Activated CD8-positive, alpha-beta T cell treated with anti-CD3 and anti-CD28 coated beads, Interleukin-2, amount 10 ng/mL, durations not matched to agents 7 days and 5 days (primary cell): ENCODE measurements at regions of chr12 and their contacts with region 1.

Region 1: DNA sequence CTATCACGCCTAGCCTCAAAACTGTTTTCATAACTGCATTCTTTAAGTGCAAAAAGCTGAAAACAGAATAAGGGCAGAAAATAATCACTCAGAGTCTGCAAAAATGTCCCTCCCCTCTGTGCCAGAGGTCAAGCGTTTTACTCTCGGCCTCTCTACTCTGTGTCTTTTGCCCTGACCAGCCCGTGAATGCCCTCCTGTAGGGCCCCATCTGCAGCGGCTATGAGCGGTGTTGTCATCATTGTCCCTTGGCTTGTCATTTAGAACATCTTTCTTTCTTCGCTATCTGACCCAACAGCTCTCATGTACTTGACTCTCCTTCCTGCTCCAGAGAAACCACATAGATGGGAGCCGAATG is 21.7 kb downstream of the ELK3 start:
- DNase-seq: no peak
- ATAC-seq: no peak
- H3K4me3 Mint-ChIP-seq: no peak overlapping the region
- H3K27ac Mint-ChIP-seq: no peak overlapping the region
- H3K4me1 Mint-ChIP-seq: peaks cover 51% of the 10 kb centered on the region
- H3K27me3 Mint-ChIP-seq: no peaks in the 10 kb centered on the region

Region 2: DNA sequence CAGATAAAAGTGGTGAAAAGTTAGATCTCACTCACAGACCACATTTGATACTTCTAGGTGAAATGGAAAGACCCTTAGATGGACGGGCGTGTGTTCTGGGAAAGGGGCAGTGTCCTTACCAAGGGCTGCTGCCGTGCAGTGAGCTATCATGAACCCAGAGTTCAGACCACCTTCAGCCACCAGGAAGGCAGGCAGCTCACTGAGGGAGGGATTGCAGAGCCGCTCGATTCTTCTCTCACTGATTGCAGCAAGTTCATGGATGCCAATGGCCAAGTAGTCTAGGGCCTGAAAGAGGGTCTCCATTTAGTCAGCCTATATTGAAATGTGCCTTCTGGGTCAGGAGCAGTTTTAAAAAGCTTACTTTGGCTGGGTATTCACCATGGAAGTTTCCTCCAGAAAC is 235.5 kb before region 1 on chr12:
- CTCF ChIA-PET with region 1: no interaction called
- POLR2A ChIA-PET with region 1: no interaction called
- DNase-seq: no peak
- ATAC-seq: no peak
- H3K4me3 Mint-ChIP-seq: no peak overlapping the region
- H3K27ac Mint-ChIP-seq: no peak overlapping the region
- H3K4me1 Mint-ChIP-seq: no peaks in the 10 kb centered on the region
- H3K27me3 Mint-ChIP-seq: no peaks in the 10 kb centered on the region

Region 3: GRCh38 chr12:95998611-95999286 is 217.1 kb before region 1 on chr12:
- CTCF ChIA-PET with region 1: interaction called, 10 read pairs
- POLR2A ChIA-PET with region 1: no interaction called
- DNase-seq: peak; percentile 73
- ATAC-seq: peak; percentile 99
- H3K4me3 Mint-ChIP-seq: no peak overlapping the region
- H3K27ac Mint-ChIP-seq: no peak overlapping the region
- H3K4me1 Mint-ChIP-seq: peaks cover 6% of the 10 kb centered on the region
- H3K27me3 Mint-ChIP-seq: no peaks in the 10 kb centered on the region

Region 4: DNA sequence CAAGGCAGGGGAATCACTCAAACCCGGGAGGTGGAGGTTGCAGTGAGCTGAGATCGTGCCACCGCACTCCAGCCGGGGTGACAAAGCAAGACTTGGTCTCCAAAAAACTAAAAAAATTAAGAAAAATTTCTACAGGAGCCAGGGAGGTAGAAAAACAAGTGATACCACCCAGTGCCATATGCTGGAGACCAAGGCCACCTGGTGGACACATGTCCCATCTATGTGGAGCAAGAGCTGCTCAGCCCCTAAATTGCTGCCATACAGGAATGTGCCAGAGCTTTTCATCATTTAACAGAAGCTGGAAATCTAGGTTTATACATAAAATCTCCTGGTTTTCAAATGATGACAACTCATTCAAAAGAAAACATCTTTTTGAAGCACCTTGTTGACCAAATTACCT is 83.1 kb before region 1 on chr12:
- CTCF ChIA-PET with region 1: interaction called, 12 read pairs
- POLR2A ChIA-PET with region 1: no interaction called
- DNase-seq: peak; percentile 53
- ATAC-seq: peak; percentile 58
- H3K4me3 Mint-ChIP-seq: no peak overlapping the region
- H3K27ac Mint-ChIP-seq: no peak overlapping the region
- H3K4me1 Mint-ChIP-seq: peaks cover 16% of the 10 kb centered on the region
- H3K27me3 Mint-ChIP-seq: peaks cover 22% of the 10 kb centered on the region

Region 5: GRCh38 chr12:96194971-96195844 is 20.7 kb before region 1 on chr12:
- CTCF ChIA-PET with region 1: interaction called, 50 read pairs
- POLR2A ChIA-PET with region 1: interaction called, 15 read pairs
- DNase-seq: peak; percentile 79
- ATAC-seq: peak; percentile 73
- H3K4me3 Mint-ChIP-seq: peak overlapping the region; percentile 93
- H3K27ac Mint-ChIP-seq: peak overlapping the region; percentile 93
- H3K4me1 Mint-ChIP-seq: peaks cover 52% of the 10 kb centered on the region
- H3K27me3 Mint-ChIP-seq: no peaks in the 10 kb centered on the region

Region 6: DNA sequence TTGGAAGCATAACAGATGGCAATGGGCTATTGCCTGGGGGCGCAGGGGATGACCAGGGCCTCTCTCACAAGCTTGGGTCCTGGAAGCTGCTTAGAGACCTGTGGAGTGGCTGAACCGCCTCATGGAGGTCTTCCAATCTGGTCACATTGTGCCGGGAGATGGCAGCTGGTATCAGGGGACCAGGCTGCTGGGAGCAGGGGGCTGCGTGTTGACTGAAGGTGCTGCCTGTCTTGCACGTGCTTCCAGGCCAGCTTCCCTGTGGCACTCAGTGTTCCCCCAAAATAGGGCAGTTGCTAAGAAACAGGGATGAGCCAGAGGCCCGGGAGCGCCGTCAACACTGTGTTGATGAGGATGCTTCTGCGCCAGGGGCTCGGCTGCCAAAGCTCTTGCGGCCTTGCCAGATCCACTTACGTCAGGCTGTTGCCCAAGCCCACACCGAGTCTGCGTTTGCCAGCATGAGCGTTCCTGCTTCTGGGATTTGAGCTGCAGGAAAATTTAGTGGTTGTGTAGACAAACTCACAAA is 18.1 kb after region 1 on chr12:
- CTCF ChIA-PET with region 1: interaction called, 21 read pairs
- POLR2A ChIA-PET with region 1: no interaction called
- DNase-seq: no peak
- ATAC-seq: no peak
- H3K4me3 Mint-ChIP-seq: no peak overlapping the region
- H3K27ac Mint-ChIP-seq: no peak overlapping the region
- H3K4me1 Mint-ChIP-seq: peaks cover 36% of the 10 kb centered on the region
- H3K27me3 Mint-ChIP-seq: no peaks in the 10 kb centered on the region

Region 7: GRCh38 chr12:96516472-96517430 is 300.9 kb after region 1 on chr12:
- CTCF ChIA-PET with region 1: interaction called, 60 read pairs
- POLR2A ChIA-PET with region 1: no interaction called
- DNase-seq: peak; percentile 93
- ATAC-seq: peak; percentile 85
- H3K4me3 Mint-ChIP-seq: peak overlapping the region; percentile 19
- H3K27ac Mint-ChIP-seq: peak overlapping the region; percentile 76
- H3K4me1 Mint-ChIP-seq: peaks cover 20% of the 10 kb centered on the region
- H3K27me3 Mint-ChIP-seq: no peaks in the 10 kb centered on the region